Stomach (tissue), 19 donors: ENCODE measurements at regions of chr4 and their contacts with region 1.

Region 1: DNA sequence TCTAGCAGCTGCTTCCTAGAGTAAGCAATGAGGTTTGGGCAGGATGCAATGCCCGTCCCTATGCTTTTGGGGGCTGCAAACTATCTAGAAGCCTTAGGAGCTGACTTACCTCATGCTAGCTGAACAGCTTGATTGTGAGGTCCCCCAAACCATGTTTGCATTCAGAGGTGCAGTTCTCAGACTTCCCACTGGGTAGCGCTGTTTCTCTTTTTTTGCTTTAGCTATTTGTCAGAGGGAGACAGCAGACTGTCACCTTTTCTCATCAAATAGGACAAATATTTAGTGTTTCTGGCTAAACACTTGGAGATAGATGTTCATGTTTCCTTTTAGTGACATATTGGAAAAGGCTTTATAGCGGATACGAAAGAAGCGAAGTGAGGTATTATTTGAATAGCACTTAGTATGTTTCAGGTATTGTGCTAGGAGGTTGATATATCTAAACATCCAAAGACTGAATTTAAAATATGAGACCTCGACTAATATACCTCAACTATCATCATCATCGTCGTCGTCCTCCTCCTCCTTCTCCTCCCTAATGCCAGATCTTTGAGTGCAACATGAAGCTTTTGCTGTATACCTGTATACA is 18.7 kb upstream of the TMEM192 start:
- DNase-seq: peak; percentile 72 to 81
- H3K4me3 ChIP-seq: no peak overlapping the region
- H3K27ac ChIP-seq: no peak overlapping the region
- H3K4me1 ChIP-seq: peaks cover 0 to 6% (median 2%) of the 10 kb centered on the region in 4 donors
- H3K27me3 ChIP-seq: peaks cover 0 to 10% (median 0%) of the 10 kb centered on the region in 3 donors
- CTCF ChIP-seq: peak in 5 of 7 experiments; percentile 84 to 95 (median 86)
- EP300 ChIP-seq: no peak
- POLR2A ChIP-seq: no peak

Region 2: GRCh38 chr4:164357957-164358356 is 773.4 kb before region 1 on chr4:
- intact Hi-C with region 1: no loop called
- DNase-seq: no peak
- H3K4me3 ChIP-seq: no peak overlapping the region
- H3K27ac ChIP-seq: no peak overlapping the region
- H3K4me1 ChIP-seq: no peaks in the 10 kb centered on the region
- H3K27me3 ChIP-seq: no peaks in the 10 kb centered on the region
- CTCF ChIP-seq: no peak
- EP300 ChIP-seq: no peak
- POLR2A ChIP-seq: no peak

Region 3: GRCh38 chr4:165464813-165465381 is 333.6 kb after region 1 on chr4:
- intact Hi-C with region 1: loop called (anchors 5 kb)
- DNase-seq: peak in 1 of 2 donors; percentile 79
- H3K4me3 ChIP-seq: no peak overlapping the region
- H3K27ac ChIP-seq: no peak overlapping the region
- H3K4me1 ChIP-seq: peaks cover 0 to 13% (median 6%) of the 10 kb centered on the region in 4 donors
- H3K27me3 ChIP-seq: no peaks in the 10 kb centered on the region
- CTCF ChIP-seq: peak in 5 of 7 experiments; percentile 15 to 77 (median 68)
- EP300 ChIP-seq: no peak
- POLR2A ChIP-seq: no peak

Region 4: GRCh38 chr4:165472943-165473676 is 341.8 kb after region 1 on chr4:
- intact Hi-C with region 1: loop called (anchors 5 kb)
- DNase-seq: no peak
- H3K4me3 ChIP-seq: no peak overlapping the region
- H3K27ac ChIP-seq: no peak overlapping the region
- H3K4me1 ChIP-seq: peaks cover 0 to 5% (median 0%) of the 10 kb centered on the region in 4 donors
- H3K27me3 ChIP-seq: no peaks in the 10 kb centered on the region
- CTCF ChIP-seq: no peak
- EP300 ChIP-seq: no peak
- POLR2A ChIP-seq: no peak